ENCODE measurements at regions of chr15 and their contacts with region 1.

Region 1: DNA sequence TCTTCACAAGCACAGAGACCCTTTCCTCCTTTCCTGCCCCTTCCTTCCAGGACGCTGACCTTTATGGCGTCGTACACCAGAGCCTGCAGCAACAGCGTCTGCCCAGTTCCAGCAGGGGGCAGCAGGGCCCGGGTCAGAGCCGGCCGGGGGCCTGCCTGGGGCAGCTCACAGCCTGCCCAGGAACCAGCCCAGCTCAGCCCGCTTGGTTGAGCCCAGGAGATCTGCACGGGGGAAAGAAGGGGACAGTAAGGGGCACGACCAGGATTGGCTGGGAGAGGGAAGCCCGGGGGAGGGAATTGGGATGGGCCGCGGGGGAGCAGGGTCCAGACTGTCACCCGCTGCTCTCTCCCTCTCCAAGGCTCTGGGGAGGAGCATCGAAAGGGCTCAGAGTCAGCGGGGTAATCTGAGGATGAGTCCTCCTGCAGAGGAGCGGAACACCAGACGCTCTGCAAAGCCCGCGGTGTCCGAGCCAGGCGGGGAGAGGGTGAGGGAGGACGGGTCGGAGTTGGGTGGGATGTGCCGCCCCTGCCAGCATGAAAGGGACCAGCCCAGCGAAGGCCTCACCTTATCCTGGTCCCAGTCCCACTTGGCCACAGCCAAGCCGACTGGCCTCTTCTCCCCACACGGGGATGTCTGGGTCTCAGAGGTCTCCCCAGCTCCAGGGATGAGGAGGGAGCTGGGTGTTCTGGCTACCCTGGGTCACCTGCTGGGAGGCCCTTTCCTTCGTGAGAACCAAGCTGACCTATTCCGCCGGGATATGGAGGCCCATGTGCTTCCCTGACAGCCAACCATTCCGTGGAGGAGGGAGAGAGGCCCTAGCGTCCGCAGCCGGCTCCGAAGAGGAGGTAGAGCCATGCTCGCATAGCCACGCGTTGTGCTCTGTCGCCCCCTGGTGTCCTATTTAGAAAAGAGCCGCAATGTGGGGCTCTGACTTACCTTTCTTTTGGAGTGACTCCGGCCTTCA is 7.4 kb upstream of the IGDCC3 start:
- DNase-seq: peak; percentile 89
- ATAC-seq: peak; percentile 87
- H3K4me3 ChIP-seq: peak overlapping the region; percentile 50 to 67 (median 58)
- H3K4me3 Mint-ChIP-seq: peak overlapping the region; percentile 92
- H3K27ac ChIP-seq: peak overlapping the region in 1 of 2 donors; percentile 36
- H3K27ac Mint-ChIP-seq: peak overlapping the region; percentile 15
- H3K4me1 ChIP-seq: peaks cover 7 to 13% of the 10 kb centered on the region in 2 donors
- H3K4me1 Mint-ChIP-seq: peaks cover 16% of the 10 kb centered on the region
- H3K27me3 ChIP-seq: peaks cover 0 to 21% (median 4%) of the 10 kb centered on the region in 4 experiments
- H3K27me3 Mint-ChIP-seq: peaks cover 44% of the 10 kb centered on the region
- CTCF ChIP-seq: peak; percentile 79

Region 2: GRCh38 chr15:65312400-65312916 is 72.7 kb before region 1 on chr15:
- CTCF ChIA-PET with region 1: interaction called, 165 read pairs
- POLR2A ChIA-PET with region 1: no interaction called
- intact Hi-C with region 1: no loop called
- DNase-seq: no peak
- ATAC-seq: no peak
- H3K4me3 ChIP-seq: no peak overlapping the region
- H3K4me3 Mint-ChIP-seq: no peak overlapping the region
- H3K27ac ChIP-seq: no peak overlapping the region
- H3K27ac Mint-ChIP-seq: no peak overlapping the region
- H3K4me1 ChIP-seq: no peaks in the 10 kb centered on the region
- H3K4me1 Mint-ChIP-seq: no peaks in the 10 kb centered on the region
- H3K27me3 ChIP-seq: peaks cover 0 to 6% (median 0%) of the 10 kb centered on the region in 4 experiments
- H3K27me3 Mint-ChIP-seq: peaks cover 10% of the 10 kb centered on the region
- CTCF ChIP-seq: no peak

Region 3: DNA sequence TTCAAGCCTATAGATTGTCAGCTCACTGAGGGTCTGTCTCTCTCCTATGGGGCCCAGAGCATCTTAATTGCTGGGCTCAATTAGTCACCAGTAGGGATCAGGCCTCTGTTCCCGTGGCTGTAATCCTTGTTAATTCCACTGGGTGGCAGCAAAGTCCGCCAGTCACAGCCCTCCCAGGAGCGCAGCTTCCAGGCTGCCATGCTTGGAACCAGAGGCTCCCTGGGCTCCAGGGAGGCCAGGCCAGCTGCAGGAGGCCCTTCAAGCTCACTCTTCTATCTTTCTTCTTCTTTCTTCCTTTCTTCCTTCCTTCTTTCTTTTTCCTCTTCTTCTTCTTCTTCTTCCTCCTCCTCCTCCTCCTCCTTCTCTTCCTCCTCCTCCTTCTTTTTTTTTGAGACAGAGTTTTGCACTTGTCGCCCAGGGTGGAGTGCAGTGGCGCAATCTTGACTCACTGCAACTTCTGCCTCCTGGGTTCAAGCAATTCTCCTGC is 66.3 kb before region 1 on chr15:
- CTCF ChIA-PET with region 1: interaction called, 165 read pairs
- POLR2A ChIA-PET with region 1: no interaction called
- intact Hi-C with region 1: loop called (anchors 1 kb)
- DNase-seq: peak; percentile 81
- ATAC-seq: peak; percentile 99
- H3K4me3 ChIP-seq: no peak overlapping the region
- H3K4me3 Mint-ChIP-seq: no peak overlapping the region
- H3K27ac ChIP-seq: no peak overlapping the region
- H3K27ac Mint-ChIP-seq: no peak overlapping the region
- H3K4me1 ChIP-seq: no peaks in the 10 kb centered on the region
- H3K4me1 Mint-ChIP-seq: no peaks in the 10 kb centered on the region
- H3K27me3 ChIP-seq: peaks cover 0 to 6% (median 0%) of the 10 kb centered on the region in 4 experiments
- H3K27me3 Mint-ChIP-seq: peaks cover 16% of the 10 kb centered on the region
- CTCF ChIP-seq: peak; percentile 91

Region 4: DNA sequence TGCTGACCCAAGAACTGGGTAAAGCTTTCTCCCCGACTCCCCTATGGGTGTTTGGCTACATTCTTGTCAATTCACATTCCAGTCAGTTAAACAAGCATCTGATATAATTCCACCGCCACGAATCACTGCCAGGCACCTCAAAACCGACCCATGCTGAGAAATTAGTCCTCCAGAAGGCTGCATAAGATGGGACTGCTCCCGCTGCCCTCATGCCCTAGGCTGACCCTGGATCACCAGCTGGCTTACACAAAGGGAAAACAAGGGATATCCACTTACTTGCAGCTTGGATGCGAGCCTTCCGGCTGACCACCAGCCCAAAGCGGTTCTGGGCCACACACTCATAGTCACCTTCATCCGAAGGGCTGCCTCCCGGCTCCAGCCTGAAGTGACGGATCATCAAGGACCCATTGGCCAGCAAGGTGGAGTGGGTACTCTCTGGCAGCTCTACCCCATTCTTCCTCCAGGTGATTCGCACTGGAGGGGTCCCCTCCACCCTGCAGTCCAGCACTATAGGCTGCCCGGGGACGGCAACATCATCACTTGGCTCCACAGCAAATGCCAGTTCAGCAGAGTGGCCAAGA is 10.3 kb before region 1 on chr15:
- CTCF ChIA-PET with region 1: interaction called, 14 read pairs
- POLR2A ChIA-PET with region 1: no interaction called
- intact Hi-C with region 1: no loop called
- DNase-seq: no peak
- ATAC-seq: no peak
- H3K4me3 ChIP-seq: no peak overlapping the region
- H3K4me3 Mint-ChIP-seq: no peak overlapping the region
- H3K27ac ChIP-seq: no peak overlapping the region
- H3K27ac Mint-ChIP-seq: no peak overlapping the region
- H3K4me1 ChIP-seq: peaks cover 10 to 17% of the 10 kb centered on the region in 2 donors
- H3K4me1 Mint-ChIP-seq: peaks cover 18% of the 10 kb centered on the region
- H3K27me3 ChIP-seq: peaks cover 0 to 65% (median 21%) of the 10 kb centered on the region in 4 experiments
- H3K27me3 Mint-ChIP-seq: peaks cover 52% of the 10 kb centered on the region
- CTCF ChIP-seq: no peak

Region 5: GRCh38 chr15:65395567-65396185 is 10.5 kb after region 1 on chr15:
- CTCF ChIA-PET with region 1: interaction called, 14 read pairs
- POLR2A ChIA-PET with region 1: no interaction called
- intact Hi-C with region 1: no loop called
- DNase-seq: no peak
- ATAC-seq: no peak
- H3K4me3 ChIP-seq: no peak overlapping the region
- H3K4me3 Mint-ChIP-seq: no peak overlapping the region
- H3K27ac ChIP-seq: no peak overlapping the region
- H3K27ac Mint-ChIP-seq: no peak overlapping the region
- H3K4me1 ChIP-seq: peaks cover 11 to 17% of the 10 kb centered on the region in 2 donors
- H3K4me1 Mint-ChIP-seq: peaks cover 8% of the 10 kb centered on the region
- H3K27me3 ChIP-seq: peaks cover 0 to 45% (median 29%) of the 10 kb centered on the region in 4 experiments
- H3K27me3 Mint-ChIP-seq: peaks cover 61% of the 10 kb centered on the region
- CTCF ChIP-seq: no peak

Region 6: DNA sequence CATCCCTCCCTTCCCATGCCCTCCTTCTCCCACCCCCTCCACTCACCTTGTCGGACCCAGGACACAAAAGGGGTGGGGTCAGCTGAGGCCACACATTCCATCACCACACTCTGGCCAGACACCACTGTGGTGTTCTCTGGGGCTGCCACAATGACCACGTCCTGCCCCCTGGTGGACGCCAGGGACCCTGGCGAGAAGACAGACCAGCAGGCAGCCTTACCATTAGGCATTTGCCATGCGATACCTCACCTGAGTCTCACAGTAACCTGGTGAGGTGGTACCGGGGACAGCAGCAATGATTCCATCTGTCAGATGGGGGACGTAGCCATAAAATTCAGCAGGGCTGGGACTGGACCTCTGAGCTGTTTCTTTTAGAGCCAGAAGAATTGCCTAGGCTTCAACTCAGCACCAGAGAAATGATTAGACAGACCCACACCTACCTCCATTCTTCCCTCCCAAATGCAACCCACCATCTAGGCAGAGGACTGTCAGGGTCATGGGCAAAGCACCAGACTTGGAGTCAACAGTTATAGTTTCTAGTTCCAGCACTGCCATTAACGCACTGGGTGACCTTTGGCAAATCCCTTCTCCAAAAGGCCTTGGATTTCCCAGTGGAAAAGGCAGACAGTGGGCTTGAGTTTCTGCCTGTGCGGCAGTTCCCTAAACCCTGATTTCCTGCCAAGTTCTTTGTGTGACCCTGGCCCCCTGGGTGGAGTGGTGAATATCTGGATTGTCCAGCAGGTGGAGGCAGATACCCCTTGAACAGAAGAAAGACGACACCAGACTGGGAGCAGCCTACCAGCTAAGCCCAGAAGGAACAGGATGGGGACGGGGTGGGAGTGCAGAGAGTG is 15.8 kb after region 1 on chr15:
- CTCF ChIA-PET with region 1: interaction called, 14 read pairs
- POLR2A ChIA-PET with region 1: no interaction called
- intact Hi-C with region 1: no loop called
- DNase-seq: peak; percentile 54
- ATAC-seq: peak; percentile 58
- H3K4me3 ChIP-seq: no peak overlapping the region
- H3K4me3 Mint-ChIP-seq: no peak overlapping the region
- H3K27ac ChIP-seq: no peak overlapping the region
- H3K27ac Mint-ChIP-seq: no peak overlapping the region
- H3K4me1 ChIP-seq: peaks cover 7 to 10% of the 10 kb centered on the region in 2 donors
- H3K4me1 Mint-ChIP-seq: peaks cover 8% of the 10 kb centered on the region
- H3K27me3 ChIP-seq: peaks cover 0 to 22% (median 19%) of the 10 kb centered on the region in 4 experiments
- H3K27me3 Mint-ChIP-seq: peaks cover 47% of the 10 kb centered on the region
- CTCF ChIP-seq: peak; percentile 64

Region 7: DNA sequence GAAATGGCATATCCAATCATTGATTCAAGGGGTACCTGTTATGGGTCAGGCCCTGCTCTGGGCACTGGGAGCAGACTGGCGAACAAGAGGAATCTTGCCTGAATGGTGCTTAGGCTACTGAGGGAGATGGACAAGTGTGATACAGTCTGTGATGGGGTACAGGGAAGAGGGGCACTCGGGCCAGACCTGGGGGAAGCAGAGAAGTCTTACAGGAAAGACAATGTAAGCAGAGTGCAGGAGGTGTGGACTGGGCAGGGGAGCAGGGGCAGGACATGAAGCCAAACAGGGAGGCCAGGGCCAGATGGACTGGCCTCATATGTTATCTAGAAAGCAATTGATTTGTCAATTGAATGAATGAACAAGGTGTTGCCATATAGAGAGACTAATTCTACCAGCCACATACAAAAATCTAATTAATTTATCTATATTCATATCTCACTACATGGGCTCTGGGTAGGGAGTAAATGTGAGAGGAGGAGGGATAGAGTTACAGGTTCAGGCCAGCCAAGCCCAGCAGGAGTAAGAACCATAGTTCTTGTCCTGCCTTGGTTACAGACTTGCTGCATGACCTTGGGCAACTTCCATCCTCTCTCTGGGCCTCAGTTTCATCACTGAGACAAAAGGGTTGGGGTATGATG is 41.2 kb after region 1 on chr15:
- CTCF ChIA-PET with region 1: no interaction called
- POLR2A ChIA-PET with region 1: no interaction called
- intact Hi-C with region 1: no loop called
- DNase-seq: no peak
- ATAC-seq: no peak
- H3K4me3 ChIP-seq: no peak overlapping the region
- H3K4me3 Mint-ChIP-seq: no peak overlapping the region
- H3K27ac ChIP-seq: no peak overlapping the region
- H3K27ac Mint-ChIP-seq: no peak overlapping the region
- H3K4me1 ChIP-seq: peaks cover 10 to 17% of the 10 kb centered on the region in 2 donors
- H3K4me1 Mint-ChIP-seq: peaks cover 21% of the 10 kb centered on the region
- H3K27me3 ChIP-seq: peaks cover 0 to 34% (median 15%) of the 10 kb centered on the region in 4 experiments
- H3K27me3 Mint-ChIP-seq: peaks cover 47% of the 10 kb centered on the region
- CTCF ChIP-seq: no peak

Region 8: DNA sequence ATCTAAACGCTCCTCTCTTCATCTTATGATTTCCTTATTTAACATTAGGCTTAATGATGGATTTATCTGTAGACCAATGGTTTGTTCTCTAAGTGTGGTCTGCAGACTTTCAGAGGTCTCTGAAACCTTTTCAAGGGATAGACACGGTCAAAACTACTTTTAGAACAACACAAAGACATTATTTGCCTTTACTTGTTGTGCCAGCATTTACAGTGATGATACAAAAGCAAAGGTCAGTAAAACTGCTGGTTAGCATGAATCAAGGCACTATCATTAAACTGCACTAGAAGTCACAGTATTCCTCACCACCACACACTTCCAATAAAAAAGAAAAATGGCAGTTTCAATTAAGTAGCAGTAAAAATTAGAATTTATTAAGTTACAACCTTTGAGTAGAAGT is 62.0 kb after region 1 on chr15:
- CTCF ChIA-PET with region 1: no interaction called
- POLR2A ChIA-PET with region 1: no interaction called
- intact Hi-C with region 1: no loop called
- DNase-seq: no peak
- ATAC-seq: no peak
- H3K4me3 ChIP-seq: no peak overlapping the region
- H3K4me3 Mint-ChIP-seq: no peak overlapping the region
- H3K27ac ChIP-seq: no peak overlapping the region
- H3K27ac Mint-ChIP-seq: no peak overlapping the region
- H3K4me1 ChIP-seq: no peaks in the 10 kb centered on the region
- H3K4me1 Mint-ChIP-seq: no peaks in the 10 kb centered on the region
- H3K27me3 ChIP-seq: no peaks in the 10 kb centered on the region
- H3K27me3 Mint-ChIP-seq: no peaks in the 10 kb centered on the region
- CTCF ChIP-seq: no peak

Region 9: GRCh38 chr15:65466901-65467300 is 81.7 kb after region 1 on chr15:
- CTCF ChIA-PET with region 1: no interaction called
- POLR2A ChIA-PET with region 1: no interaction called
- intact Hi-C with region 1: no loop called
- DNase-seq: no peak
- ATAC-seq: no peak
- H3K4me3 ChIP-seq: no peak overlapping the region
- H3K4me3 Mint-ChIP-seq: no peak overlapping the region
- H3K27ac ChIP-seq: no peak overlapping the region
- H3K27ac Mint-ChIP-seq: no peak overlapping the region
- H3K4me1 ChIP-seq: no peaks in the 10 kb centered on the region
- H3K4me1 Mint-ChIP-seq: no peaks in the 10 kb centered on the region
- H3K27me3 ChIP-seq: no peaks in the 10 kb centered on the region
- H3K27me3 Mint-ChIP-seq: no peaks in the 10 kb centered on the region
- CTCF ChIP-seq: no peak

Measured in B cell (primary cell).